Psoas muscle (tissue), 8 donors: ENCODE measurements at regions of chr4 and their contacts with region 1.

Region 1: GRCh38 chr4:148441986-148442831 is at the start of gene NR3C2:
- DNase-seq: peak; percentile 98 to 99
- ATAC-seq: peak; percentile 87 to 94 (median 90)
- H3K4me3 ChIP-seq: peak within 1 kb of the TSS; percentile 88
- H3K27ac ChIP-seq: peak within 1 kb of the TSS; percentile 95
- H3K4me1 ChIP-seq: peaks cover 13% of the 10 kb centered on the region
- H3K27me3 ChIP-seq: no peaks in the 10 kb centered on the region
- CTCF ChIP-seq: no peak
- total RNA-seq, gene NR3C2: 7.5 to 17.9 (median 13.1) TPM

Region 2: GRCh38 chr4:148056869-148057268 is 385.3 kb before region 1 on chr4:
- intact Hi-C with region 1: loop called in 1 of 2 experiments (anchors 5 kb)
- DNase-seq: peak; percentile 58 to 72
- ATAC-seq: peak; percentile 27 to 73 (median 57)
- H3K4me3 ChIP-seq: no peak overlapping the region
- H3K27ac ChIP-seq: peak overlapping the region; percentile 91
- H3K4me1 ChIP-seq: peaks cover 90% of the 10 kb centered on the region
- H3K27me3 ChIP-seq: no peaks in the 10 kb centered on the region
- CTCF ChIP-seq: no peak

Region 3: DNA sequence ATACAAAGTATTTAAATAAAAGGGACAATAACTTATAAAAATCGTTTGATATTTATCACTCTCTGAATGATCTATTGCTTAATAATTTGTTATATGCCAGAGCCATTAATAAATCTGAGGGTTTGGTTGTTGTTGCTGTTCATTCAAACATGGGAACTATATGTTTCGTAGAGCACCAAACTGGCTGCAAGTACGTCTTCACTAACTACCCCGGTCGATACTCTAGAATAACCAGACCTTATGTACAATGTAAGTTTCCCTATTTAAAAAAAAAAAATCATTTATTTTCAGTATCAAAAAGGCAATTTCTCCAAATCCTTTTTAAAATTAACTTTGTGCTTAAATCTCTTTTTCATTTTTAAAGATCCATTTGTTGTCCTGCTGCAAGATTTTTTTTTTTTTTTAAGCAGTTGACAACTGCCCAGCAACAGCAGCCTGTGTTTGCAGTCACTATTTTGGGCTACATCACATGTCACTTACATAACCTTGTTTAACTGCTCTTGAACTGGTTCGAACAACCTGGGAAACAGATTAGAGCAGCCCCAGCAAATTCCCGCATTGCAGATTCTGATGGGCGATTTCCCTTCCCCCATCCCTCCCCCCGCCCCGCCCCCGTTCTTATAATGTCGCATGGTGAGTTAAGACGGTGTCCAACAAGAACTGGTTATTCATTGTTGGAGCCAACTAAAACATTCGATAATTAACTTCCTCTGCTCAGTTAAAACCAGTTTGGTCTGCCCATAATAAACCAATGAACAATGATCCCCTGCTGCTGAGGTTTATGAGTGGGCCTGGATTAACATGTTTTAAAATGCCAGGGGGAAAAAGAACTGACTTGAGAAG is 238.9 kb before region 1 on chr4:
- intact Hi-C with region 1: loop called in 1 of 2 experiments (anchors 10 kb)
- DNase-seq: no peak
- ATAC-seq: peak; percentile 62 to 86 (median 81)
- H3K4me3 ChIP-seq: peak overlapping the region; percentile 58
- H3K27ac ChIP-seq: peak overlapping the region; percentile 69
- H3K4me1 ChIP-seq: peaks cover 14% of the 10 kb centered on the region
- H3K27me3 ChIP-seq: no peaks in the 10 kb centered on the region
- CTCF ChIP-seq: no peak

Region 4: GRCh38 chr4:148288448-148288847 is 153.8 kb before region 1 on chr4:
- intact Hi-C with region 1: loop called in 1 of 2 experiments (anchors 10 kb)
- DNase-seq: no peak
- ATAC-seq: peak in 3 of 4 donors; percentile 14 to 48 (median 21)
- H3K4me3 ChIP-seq: no peak overlapping the region
- H3K27ac ChIP-seq: peak overlapping the region; percentile 20
- H3K4me1 ChIP-seq: peaks cover 26% of the 10 kb centered on the region
- H3K27me3 ChIP-seq: no peaks in the 10 kb centered on the region
- CTCF ChIP-seq: no peak

Region 5: GRCh38 chr4:148311526-148311925 is 130.7 kb before region 1 on chr4:
- intact Hi-C with region 1: loop called in 1 of 2 experiments (anchors 5 kb)
- DNase-seq: no peak
- ATAC-seq: peak; percentile 72 to 93 (median 81)
- H3K4me3 ChIP-seq: no peak overlapping the region
- H3K27ac ChIP-seq: peak overlapping the region; percentile 69
- H3K4me1 ChIP-seq: peaks cover 52% of the 10 kb centered on the region
- H3K27me3 ChIP-seq: no peaks in the 10 kb centered on the region
- CTCF ChIP-seq: no peak

Region 6: GRCh38 chr4:148366251-148366650 is 76.0 kb before region 1 on chr4:
- intact Hi-C with region 1: no loop called
- DNase-seq: no peak
- ATAC-seq: peak in 1 of 4 donors; percentile 43
- H3K4me3 ChIP-seq: no peak overlapping the region
- H3K27ac ChIP-seq: no peak overlapping the region
- H3K4me1 ChIP-seq: peaks cover 18% of the 10 kb centered on the region
- H3K27me3 ChIP-seq: no peaks in the 10 kb centered on the region
- CTCF ChIP-seq: no peak

Region 7: GRCh38 chr4:148415500-148415899 is 26.7 kb before region 1 on chr4:
- intact Hi-C with region 1: no loop called
- DNase-seq: no peak
- ATAC-seq: peak in 1 of 4 donors; percentile 57
- H3K4me3 ChIP-seq: no peak overlapping the region
- H3K27ac ChIP-seq: no peak overlapping the region
- H3K4me1 ChIP-seq: peaks cover 10% of the 10 kb centered on the region
- H3K27me3 ChIP-seq: no peaks in the 10 kb centered on the region
- CTCF ChIP-seq: no peak

Region 8: DNA sequence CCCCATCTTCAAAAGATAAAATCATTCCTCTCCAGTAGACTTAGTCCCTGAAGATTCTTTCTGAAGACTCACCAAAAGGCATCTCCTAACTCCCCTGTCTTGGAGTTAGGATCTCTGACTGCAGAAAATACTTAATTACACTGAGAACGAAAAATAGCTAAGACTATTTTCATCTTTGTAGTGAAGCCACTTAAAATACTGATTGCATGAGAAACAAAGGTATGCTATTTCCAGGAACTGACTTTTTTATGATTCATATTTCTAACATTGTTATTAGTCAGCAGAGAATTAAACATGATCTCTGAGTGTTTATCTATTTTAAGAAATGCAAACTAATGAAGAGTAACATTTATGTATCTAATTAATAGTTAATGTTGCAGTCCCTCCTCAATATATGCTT is 71.8 kb after region 1 on chr4:
- intact Hi-C with region 1: loop called in 1 of 2 experiments (anchors 5 kb)
- DNase-seq: no peak
- ATAC-seq: peak in 1 of 4 donors; percentile 37
- H3K4me3 ChIP-seq: no peak overlapping the region
- H3K27ac ChIP-seq: peak overlapping the region; percentile 40
- H3K4me1 ChIP-seq: peaks cover 3% of the 10 kb centered on the region
- H3K27me3 ChIP-seq: no peaks in the 10 kb centered on the region
- CTCF ChIP-seq: no peak

Region 9: GRCh38 chr4:148574502-148574901 is 132.3 kb after region 1 on chr4:
- intact Hi-C with region 1: loop called in 1 of 2 experiments (anchors 5 kb)
- DNase-seq: no peak
- ATAC-seq: peak; percentile 96 to 98 (median 96)
- H3K4me3 ChIP-seq: peak overlapping the region; percentile 40
- H3K27ac ChIP-seq: peak overlapping the region; percentile 73
- H3K4me1 ChIP-seq: peaks cover 8% of the 10 kb centered on the region
- H3K27me3 ChIP-seq: no peaks in the 10 kb centered on the region
- CTCF ChIP-seq: no peak